ENCODE measurements at regions of chr16 and their contacts with region 1.

Region 1: GRCh38 chr16:20695024-20695423 is 2.5 kb downstream of the ACSM1 start:
- DNase-seq: no peak
- H3K4me3 ChIP-seq: no peak overlapping the region
- H3K27ac ChIP-seq: no peak overlapping the region
- H3K4me1 ChIP-seq: no peaks in the 10 kb centered on the region
- H3K27me3 ChIP-seq: no peaks in the 10 kb centered on the region
- CTCF ChIP-seq: no peak
- POLR2A ChIP-seq: no peak

Region 2: DNA sequence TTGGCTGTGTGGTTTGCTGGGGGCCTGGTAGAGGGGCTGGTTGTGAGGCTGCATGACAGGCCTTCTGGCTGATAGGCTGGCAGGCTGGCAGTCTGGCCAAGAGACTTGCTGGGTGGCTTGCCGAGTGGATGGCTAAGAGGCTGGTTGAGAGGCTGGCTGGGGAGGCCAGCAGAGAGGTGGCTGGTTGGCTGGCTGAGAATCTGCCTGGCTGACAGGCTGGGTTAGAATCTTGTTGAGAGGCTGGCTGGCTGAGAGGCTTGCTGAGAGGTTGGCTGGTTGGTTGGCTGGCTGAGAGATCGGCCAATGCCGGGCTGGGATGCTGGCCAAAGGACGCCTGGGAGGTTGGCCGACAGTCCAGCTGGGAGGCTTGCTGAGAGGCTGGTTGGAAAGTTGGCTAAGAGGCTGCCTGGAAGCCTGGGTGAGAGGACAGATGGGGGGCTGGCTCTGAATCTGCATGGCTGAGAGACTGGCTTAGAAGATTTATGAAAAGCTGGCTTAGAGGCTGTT is 83.0 kb before region 1 on chr16:
- intact Hi-C with region 1: loop called (anchors 10 kb)
- DNase-seq: peak; percentile 68 to 74
- H3K4me3 ChIP-seq: no peak overlapping the region
- H3K27ac ChIP-seq: peak overlapping the region; percentile 39 to 74 (median 67)
- H3K4me1 ChIP-seq: peaks cover 34 to 52% of the 10 kb centered on the region in 2 donors
- H3K27me3 ChIP-seq: no peaks in the 10 kb centered on the region
- CTCF ChIP-seq: no peak
- POLR2A ChIP-seq: no peak

Region 3: GRCh38 chr16:20806168-20807050 is 111.4 kb after region 1 on chr16 and contains the starts of genes ERI2 and REXO5:
- intact Hi-C with region 1: no loop called
- DNase-seq: peak; percentile 90 to 92
- H3K4me3 ChIP-seq: peak within 1 kb of the TSS; percentile 55 to 97 (median 97)
- H3K27ac ChIP-seq: peak within 1 kb of the TSS; percentile 82 to 93 (median 85)
- H3K4me1 ChIP-seq: peaks cover 5 to 10% of the 10 kb centered on the region in 2 donors
- H3K27me3 ChIP-seq: no peaks in the 10 kb centered on the region
- CTCF ChIP-seq: peak in 2 of 6 experiments; percentile 33 to 39
- POLR2A ChIP-seq: peak in 1 of 2 donors; percentile 81
- total RNA-seq, gene ERI2: 22.2 to 31.4 (median 25.3) TPM
- total RNA-seq, gene REXO5: 0.78 to 3.6 (median 1.8) TPM

Measured in thyroid gland (tissue), 4 donors.